Heart left ventricle (tissue), 16 donors: ENCODE measurements at regions of chr16 and their contacts with region 1.

Region 1: DNA sequence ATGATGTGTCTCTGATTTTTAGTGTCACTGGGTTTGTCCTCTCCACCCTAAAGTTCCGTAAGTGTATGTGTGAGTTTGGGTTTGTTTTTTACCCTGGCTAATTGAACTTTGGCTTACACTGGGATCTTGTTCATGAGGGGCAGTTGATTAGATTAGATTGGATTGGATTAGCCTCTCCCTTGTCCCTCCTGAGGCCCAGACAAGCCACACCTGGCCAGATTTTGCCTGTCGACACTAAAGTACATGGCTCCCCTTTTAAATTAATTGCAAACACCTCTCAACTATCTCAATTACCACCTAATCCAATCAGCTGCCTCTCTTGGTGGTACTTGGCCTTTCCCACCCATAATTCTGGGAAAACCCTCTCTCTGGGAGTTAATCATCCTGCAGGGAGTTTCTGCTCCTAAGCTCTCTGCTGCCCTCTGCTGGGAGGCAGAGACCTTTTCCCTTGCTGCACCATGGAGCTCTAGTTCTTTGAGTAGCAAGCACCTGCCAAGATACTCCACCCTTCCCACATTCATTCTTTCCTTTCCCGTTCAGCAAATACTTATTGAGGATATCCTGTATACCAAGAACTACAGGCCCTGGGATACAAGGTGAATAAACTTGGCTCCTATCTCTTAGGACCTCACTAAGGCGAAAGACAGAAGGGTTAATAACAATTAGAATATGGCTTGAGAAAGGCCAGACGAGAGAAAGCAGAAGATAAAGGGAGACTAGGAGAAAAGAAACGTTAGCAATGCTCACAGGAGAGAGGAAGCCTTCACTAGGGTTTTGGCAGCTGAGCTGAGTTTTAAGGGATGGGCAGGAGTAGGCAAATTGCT is 60.0 kb upstream of the MPHOSPH6 start:
- DNase-seq: peak in 4 of 5 donors; percentile 49 to 66 (median 56)
- ATAC-seq: peak in 3 of 4 donors; percentile 50 to 75 (median 62)
- H3K4me3 ChIP-seq: no peak overlapping the region
- H3K27ac ChIP-seq: no peak overlapping the region
- H3K4me1 ChIP-seq: no peaks in the 10 kb centered on the region
- H3K27me3 ChIP-seq: peaks cover 0 to 4% (median 0%) of the 10 kb centered on the region in 9 donors
- CTCF ChIP-seq: peak; percentile 76 to 94 (median 86)
- POLR2A ChIP-seq: no peak

Region 2: DNA sequence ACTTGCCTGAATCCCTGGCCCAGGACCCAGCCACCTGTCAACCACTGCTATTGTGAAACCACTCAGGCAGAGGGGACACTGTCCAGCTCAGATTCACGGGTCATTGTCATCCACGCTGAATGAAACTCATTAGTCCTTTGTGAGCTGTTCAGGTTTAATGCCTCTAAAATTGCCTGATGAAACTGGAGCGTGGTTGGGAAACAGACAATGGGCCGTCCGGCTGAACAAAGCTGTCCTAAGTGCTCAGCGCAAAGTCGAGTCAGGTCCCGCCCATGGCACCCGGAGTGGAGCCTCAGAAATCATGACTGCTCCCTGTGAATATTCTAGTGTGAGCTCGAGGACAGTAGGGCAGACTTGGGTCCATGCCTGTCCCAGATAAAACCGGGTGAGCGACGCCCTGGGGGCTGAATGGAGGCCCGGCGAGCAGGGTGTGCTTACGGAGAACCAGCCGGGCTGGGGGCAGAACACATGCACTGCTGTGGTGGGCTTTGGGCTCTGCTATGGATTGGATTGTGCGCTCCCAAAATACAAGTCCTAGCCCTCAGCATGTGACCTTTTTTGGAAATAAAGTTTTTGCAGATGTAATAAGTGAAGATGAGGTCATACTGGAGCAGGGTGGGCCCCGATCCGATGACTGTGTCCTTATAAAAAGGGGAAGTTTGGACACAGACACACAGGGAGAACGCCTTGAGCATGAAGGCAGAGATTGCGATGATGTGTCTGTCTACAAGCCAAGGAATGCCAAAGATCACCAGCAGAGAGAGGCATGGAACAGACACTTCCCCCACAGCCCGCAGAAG is 798.3 kb before region 1 on chr16:
- intact Hi-C with region 1: no loop called
- DNase-seq: peak in 2 of 5 donors; percentile 39 to 49
- ATAC-seq: peak in 3 of 4 donors; percentile 83 to 90 (median 87)
- H3K4me3 ChIP-seq: no peak overlapping the region
- H3K27ac ChIP-seq: peak overlapping the region in 2 of 12 donors; percentile 11 to 64
- H3K4me1 ChIP-seq: peaks cover 0 to 12% (median 0%) of the 10 kb centered on the region in 12 donors
- H3K27me3 ChIP-seq: no peaks in the 10 kb centered on the region
- CTCF ChIP-seq: no peak
- POLR2A ChIP-seq: no peak

Region 3: GRCh38 chr16:81885976-81886586 is 343.9 kb before region 1 on chr16:
- intact Hi-C with region 1: loop called (anchors 1 to 5 kb)
- DNase-seq: no peak
- ATAC-seq: peak in 2 of 4 donors; percentile 51 to 52
- H3K4me3 ChIP-seq: no peak overlapping the region
- H3K27ac ChIP-seq: no peak overlapping the region
- H3K4me1 ChIP-seq: no peaks in the 10 kb centered on the region
- H3K27me3 ChIP-seq: peaks cover 0 to 3% (median 0%) of the 10 kb centered on the region in 9 donors
- CTCF ChIP-seq: peak; percentile 32 to 68 (median 52)
- POLR2A ChIP-seq: no peak

Region 4: GRCh38 chr16:81891736-81892357 is 338.2 kb before region 1 on chr16:
- intact Hi-C with region 1: loop called (anchors 1 to 5 kb)
- DNase-seq: no peak
- ATAC-seq: no peak
- H3K4me3 ChIP-seq: no peak overlapping the region
- H3K27ac ChIP-seq: no peak overlapping the region
- H3K4me1 ChIP-seq: no peaks in the 10 kb centered on the region
- H3K27me3 ChIP-seq: no peaks in the 10 kb centered on the region
- CTCF ChIP-seq: no peak
- POLR2A ChIP-seq: no peak

Region 5: GRCh38 chr16:81940781-81941560 is 289.0 kb before region 1 on chr16:
- intact Hi-C with region 1: loop called (anchors 1 to 5 kb)
- DNase-seq: no peak
- ATAC-seq: peak in 1 of 4 donors; percentile 29
- H3K4me3 ChIP-seq: no peak overlapping the region
- H3K27ac ChIP-seq: no peak overlapping the region
- H3K4me1 ChIP-seq: peaks cover 0 to 5% (median 0%) of the 10 kb centered on the region in 12 donors
- H3K27me3 ChIP-seq: peaks cover 0 to 7% (median 0%) of the 10 kb centered on the region in 9 donors
- CTCF ChIP-seq: peak; percentile 31 to 60 (median 46)
- POLR2A ChIP-seq: no peak

Region 6: DNA sequence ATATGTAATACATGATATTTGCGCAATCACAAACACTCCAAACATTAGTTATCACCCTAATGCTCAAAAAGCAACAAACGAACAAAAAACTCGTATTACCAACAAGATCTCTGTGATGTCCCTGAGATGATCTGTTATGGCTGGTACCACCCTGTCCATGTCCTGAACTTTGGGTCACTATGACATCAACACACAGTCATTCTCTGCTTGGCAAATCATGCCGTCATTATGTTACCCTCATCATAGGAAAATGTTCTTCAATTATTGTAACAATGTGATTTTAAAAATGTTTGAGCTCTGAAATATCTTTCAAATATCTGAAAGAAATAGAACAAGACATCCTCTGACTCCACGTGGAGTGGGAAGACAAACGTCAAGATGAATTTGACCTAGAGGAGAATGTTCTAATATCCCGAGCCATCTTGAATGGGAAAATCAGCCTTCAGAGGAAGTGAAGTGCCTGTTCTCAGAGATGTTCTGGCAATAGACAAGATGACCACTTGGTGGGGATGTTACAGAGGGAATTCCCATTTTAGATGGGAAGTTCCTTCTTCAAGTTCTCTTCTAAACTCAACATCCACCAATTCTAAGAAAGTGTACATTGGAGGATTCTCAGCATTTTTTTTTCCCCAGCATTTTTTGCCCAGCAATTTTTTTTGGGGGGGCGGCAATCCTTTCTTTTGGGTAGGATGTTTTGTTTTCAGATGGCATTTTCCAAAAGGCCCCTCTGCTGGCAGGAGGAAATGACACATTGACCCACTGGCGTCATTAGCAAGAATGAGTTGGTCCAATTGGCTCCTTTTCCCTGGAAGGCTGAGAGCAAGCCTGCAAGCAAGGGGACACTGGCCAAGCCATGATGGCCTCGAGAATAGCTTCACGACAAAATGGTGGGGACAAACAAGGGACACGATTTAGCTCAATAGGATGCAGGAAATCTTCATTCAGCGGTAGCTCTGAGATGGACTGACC is 198.6 kb before region 1 on chr16:
- intact Hi-C with region 1: loop called in 7 of 10 experiments (anchors 5 kb)
- DNase-seq: no peak
- ATAC-seq: no peak
- H3K4me3 ChIP-seq: no peak overlapping the region
- H3K27ac ChIP-seq: no peak overlapping the region
- H3K4me1 ChIP-seq: no peaks in the 10 kb centered on the region
- H3K27me3 ChIP-seq: peaks cover 0 to 5% (median 0%) of the 10 kb centered on the region in 9 donors
- CTCF ChIP-seq: peak in 9 of 12 donors; percentile 11 to 49 (median 36)
- POLR2A ChIP-seq: no peak

Region 7: GRCh38 chr16:82043680-82044584 is 186.1 kb before region 1 on chr16:
- intact Hi-C with region 1: loop called in 2 of 10 experiments (anchors 5 to 10 kb)
- DNase-seq: no peak
- ATAC-seq: no peak
- H3K4me3 ChIP-seq: no peak overlapping the region
- H3K27ac ChIP-seq: no peak overlapping the region
- H3K4me1 ChIP-seq: no peaks in the 10 kb centered on the region
- H3K27me3 ChIP-seq: peaks cover 0 to 22% (median under 1%) of the 10 kb centered on the region in 9 donors
- CTCF ChIP-seq: no peak
- POLR2A ChIP-seq: no peak

Region 8: DNA sequence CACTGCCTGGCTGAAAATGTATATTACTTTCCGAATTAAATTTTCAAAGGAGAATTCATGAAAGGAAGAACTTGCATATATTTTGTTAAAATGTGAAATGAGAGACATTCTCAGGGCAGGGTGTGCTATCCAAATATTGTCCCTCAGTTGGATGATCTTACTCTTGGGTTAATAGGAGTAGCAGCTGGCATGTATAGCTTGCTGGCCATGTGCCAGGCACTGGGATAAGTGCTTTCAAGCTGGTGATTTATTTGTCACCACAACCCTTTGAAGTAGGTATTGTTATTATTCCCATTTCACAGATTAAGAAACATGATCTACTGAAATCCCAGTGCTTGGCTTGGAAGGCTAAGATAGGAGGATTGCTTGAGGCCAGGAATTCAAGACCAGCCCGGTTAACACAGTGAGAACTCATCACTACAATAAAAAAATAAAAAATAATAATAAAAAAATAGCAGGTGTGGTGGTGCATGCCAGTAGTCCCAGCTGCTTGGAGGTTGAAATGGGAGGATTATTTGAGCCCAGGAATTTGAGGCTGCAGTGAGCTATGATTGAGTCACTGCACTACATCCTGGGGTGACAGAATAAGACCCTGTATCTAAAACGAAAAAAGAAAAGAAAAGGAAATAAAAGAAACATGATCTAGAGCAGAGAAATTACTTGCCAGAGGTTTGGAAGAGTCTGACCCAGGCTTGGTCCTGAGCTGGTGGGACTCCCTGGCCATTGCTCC is 48.4 kb before region 1 on chr16:
- intact Hi-C with region 1: no loop called
- DNase-seq: no peak
- ATAC-seq: no peak
- H3K4me3 ChIP-seq: no peak overlapping the region
- H3K27ac ChIP-seq: no peak overlapping the region
- H3K4me1 ChIP-seq: peaks cover 0 to 14% (median 0%) of the 10 kb centered on the region in 12 donors
- H3K27me3 ChIP-seq: peaks cover 0 to 32% (median 0%) of the 10 kb centered on the region in 9 donors
- CTCF ChIP-seq: no peak
- POLR2A ChIP-seq: no peak

Region 9: GRCh38 chr16:82317411-82318167 is 87.6 kb after region 1 on chr16:
- intact Hi-C with region 1: no loop called
- DNase-seq: peak in 3 of 5 donors; percentile 22 to 42 (median 36)
- ATAC-seq: peak; percentile 67 to 79 (median 72)
- H3K4me3 ChIP-seq: no peak overlapping the region
- H3K27ac ChIP-seq: peak overlapping the region in 5 of 12 donors; percentile 24 to 59 (median 43)
- H3K4me1 ChIP-seq: peaks cover 0 to 19% (median 0%) of the 10 kb centered on the region in 12 donors
- H3K27me3 ChIP-seq: no peaks in the 10 kb centered on the region
- CTCF ChIP-seq: no peak
- POLR2A ChIP-seq: no peak

Region 10: DNA sequence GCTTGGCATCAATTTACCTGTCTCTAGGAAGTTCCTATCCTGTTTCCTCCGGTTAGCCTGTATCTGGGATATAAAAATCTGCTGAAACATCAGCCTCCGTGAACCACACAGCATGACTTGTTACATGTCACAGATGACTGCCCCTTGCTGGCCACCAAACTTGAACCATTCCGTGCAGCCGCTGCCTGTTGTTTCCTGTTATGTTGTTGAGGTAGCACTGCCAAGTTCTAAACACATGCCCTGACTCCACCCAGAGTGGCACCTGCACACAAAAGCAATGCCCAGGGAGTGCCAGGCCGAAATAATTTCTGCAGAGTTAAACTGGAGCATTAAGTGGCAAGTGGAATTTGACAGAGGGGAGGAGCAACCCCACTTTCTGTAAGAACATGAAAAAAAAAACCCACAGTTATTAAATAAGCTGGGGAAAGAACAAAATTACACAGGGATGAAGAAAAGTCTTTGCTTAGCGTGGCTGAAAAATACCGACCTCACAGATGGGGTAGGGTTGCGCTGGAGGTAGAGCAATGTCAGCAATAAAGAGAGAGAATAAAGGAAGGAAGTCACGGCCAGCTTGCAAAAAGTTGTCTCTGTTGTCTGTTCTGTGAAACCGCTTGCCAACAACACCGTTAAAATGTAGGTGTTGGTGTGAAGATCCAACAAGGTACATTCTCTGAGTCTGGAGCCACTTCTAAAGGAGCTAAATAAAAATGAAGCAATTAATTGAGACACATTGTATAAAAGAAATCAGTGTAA is 222.2 kb after region 1 on chr16:
- intact Hi-C with region 1: no loop called
- DNase-seq: no peak
- ATAC-seq: no peak
- H3K4me3 ChIP-seq: no peak overlapping the region
- H3K27ac ChIP-seq: no peak overlapping the region
- H3K4me1 ChIP-seq: no peaks in the 10 kb centered on the region
- H3K27me3 ChIP-seq: peaks cover 0 to 5% (median 0%) of the 10 kb centered on the region in 9 donors
- CTCF ChIP-seq: no peak
- POLR2A ChIP-seq: no peak